ENCODE measurements at regions of chr12 and their contacts with region 1.

Region 1: DNA sequence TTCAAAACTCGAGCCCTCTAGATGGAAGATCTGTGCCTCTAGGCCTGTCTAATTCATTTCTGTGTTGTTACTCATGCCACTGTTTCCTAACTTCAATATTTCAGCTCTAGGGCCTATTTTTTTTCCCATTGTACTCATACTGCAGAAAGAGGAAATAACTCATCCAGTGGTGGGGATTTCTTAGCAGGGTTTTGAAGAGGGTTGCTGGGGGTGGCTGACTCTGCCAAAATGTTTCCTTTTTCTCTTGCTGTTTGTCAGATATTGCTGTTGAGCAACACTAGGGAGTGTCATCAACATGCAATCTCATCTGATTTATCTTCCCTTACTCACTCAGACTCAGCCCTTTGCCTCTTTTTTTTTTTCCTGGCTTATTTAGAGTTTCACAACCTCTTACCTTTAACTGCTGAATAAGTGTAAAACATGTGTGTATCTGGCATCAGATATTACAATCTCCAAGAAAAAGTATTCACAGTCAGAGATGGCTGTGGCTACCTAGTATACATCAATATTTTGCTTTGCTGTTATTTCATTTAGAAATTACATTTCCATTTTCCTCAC is 189.5 kb downstream of the DUSP6 start:
- DNase-seq: peak; percentile 96
- ATAC-seq: peak; percentile 79
- H3K4me3 ChIP-seq: no peak overlapping the region
- H3K27ac ChIP-seq: peak overlapping the region; percentile 96
- H3K4me1 ChIP-seq: peaks cover 63% of the 10 kb centered on the region
- H3K27me3 ChIP-seq: no peaks in the 10 kb centered on the region
- CTCF ChIP-seq: no peak

Region 2: GRCh38 chr12:89179983-89180382 is 17.2 kb after region 1 on chr12:
- CTCF ChIA-PET with region 1: no interaction called
- POLR2A ChIA-PET with region 1: no interaction called
- intact Hi-C with region 1: loop called (anchors 2 kb)
- DNase-seq: peak; percentile 87
- ATAC-seq: peak; percentile 20; the same call in 1 of the 2 replicates
- H3K4me3 ChIP-seq: no peak overlapping the region
- H3K27ac ChIP-seq: no peak overlapping the region
- H3K4me1 ChIP-seq: peaks cover 37% of the 10 kb centered on the region
- H3K27me3 ChIP-seq: no peaks in the 10 kb centered on the region
- CTCF ChIP-seq: no peak

Measured in PC-3 (cell line).